ENCODE measurements at regions of chr2 and their contacts with region 1.

Region 1: DNA sequence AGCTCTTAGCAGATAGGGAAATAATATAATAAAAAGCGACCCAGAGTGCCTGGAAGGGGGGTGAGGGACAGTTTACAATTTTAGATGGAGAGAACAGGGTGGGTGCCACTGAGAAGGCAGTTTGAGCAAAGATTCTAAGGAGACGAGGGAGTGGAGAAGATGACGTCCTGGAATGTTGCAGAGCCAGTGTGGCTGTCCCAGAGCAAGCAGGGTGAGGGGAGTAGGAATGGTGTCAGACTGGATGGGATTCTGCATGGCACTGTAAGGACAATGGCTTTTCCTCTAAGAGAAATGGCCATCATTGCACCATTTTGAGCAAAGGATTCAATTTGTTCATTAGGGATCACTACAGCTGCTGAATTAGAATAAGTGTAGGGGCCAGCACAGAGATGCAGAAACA is 73.1 kb downstream of the FAM124B start:
- DNase-seq: peak in 1 of 2 experiments; percentile 16
- H3K4me3 ChIP-seq: no peak overlapping the region
- H3K27ac ChIP-seq: no peak overlapping the region
- H3K4me1 ChIP-seq: peaks cover 9% of the 10 kb centered on the region; the same call in 1 of the 2 replicates
- H3K27me3 ChIP-seq: no peaks in the 10 kb centered on the region
- CTCF ChIP-seq: no peak

Region 2: GRCh38 chr2:223692191-223692947 is 636.4 kb before region 1 on chr2:
- CTCF ChIA-PET with region 1: interaction called, 12 read pairs
- POLR2A ChIA-PET with region 1: no interaction called
- intact Hi-C with region 1: no loop called
- DNase-seq: peak in 1 of 2 experiments; percentile 60
- H3K4me3 ChIP-seq: no peak overlapping the region
- H3K27ac ChIP-seq: no peak overlapping the region
- H3K4me1 ChIP-seq: peaks cover 15% of the 10 kb centered on the region
- H3K27me3 ChIP-seq: no peaks in the 10 kb centered on the region
- CTCF ChIP-seq: peak; percentile 79

Region 3: GRCh38 chr2:224027070-224027469 is 301.7 kb before region 1 on chr2:
- CTCF ChIA-PET with region 1: no interaction called
- POLR2A ChIA-PET with region 1: no interaction called
- intact Hi-C with region 1: no loop called
- DNase-seq: no peak
- H3K4me3 ChIP-seq: no peak overlapping the region
- H3K27ac ChIP-seq: no peak overlapping the region
- H3K4me1 ChIP-seq: peaks cover 15% of the 10 kb centered on the region
- H3K27me3 ChIP-seq: no peaks in the 10 kb centered on the region
- CTCF ChIP-seq: no peak

Region 4: DNA sequence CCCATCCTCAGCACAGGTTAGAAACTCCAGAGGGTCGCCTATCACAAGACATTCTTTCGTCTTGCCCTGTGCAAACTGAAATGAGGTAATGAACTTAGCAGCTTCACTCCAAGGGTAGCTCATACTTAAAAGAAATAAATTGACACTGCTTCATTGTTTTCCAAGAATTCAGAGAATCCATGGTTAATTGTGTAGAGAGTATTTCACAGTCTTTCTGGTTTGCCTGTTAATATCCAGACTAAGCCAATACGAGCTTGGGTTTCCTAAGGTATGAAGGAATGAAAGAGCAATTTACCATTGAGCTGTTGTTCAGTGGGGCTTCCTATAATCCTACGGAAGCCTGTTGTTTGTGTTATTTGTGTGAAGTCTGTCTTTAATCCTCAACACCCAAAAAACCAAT is 14.4 kb after region 1 on chr2:
- CTCF ChIA-PET with region 1: interaction called, 10 read pairs
- POLR2A ChIA-PET with region 1: no interaction called
- intact Hi-C with region 1: no loop called
- DNase-seq: no peak
- H3K4me3 ChIP-seq: no peak overlapping the region
- H3K27ac ChIP-seq: no peak overlapping the region
- H3K4me1 ChIP-seq: no peaks in the 10 kb centered on the region
- H3K27me3 ChIP-seq: no peaks in the 10 kb centered on the region
- CTCF ChIP-seq: no peak

Measured in PC-9 (cell line).